Left lung (tissue), 14 donors: ENCODE measurements at regions of chr10 and their contacts with region 1.

Region 1: DNA sequence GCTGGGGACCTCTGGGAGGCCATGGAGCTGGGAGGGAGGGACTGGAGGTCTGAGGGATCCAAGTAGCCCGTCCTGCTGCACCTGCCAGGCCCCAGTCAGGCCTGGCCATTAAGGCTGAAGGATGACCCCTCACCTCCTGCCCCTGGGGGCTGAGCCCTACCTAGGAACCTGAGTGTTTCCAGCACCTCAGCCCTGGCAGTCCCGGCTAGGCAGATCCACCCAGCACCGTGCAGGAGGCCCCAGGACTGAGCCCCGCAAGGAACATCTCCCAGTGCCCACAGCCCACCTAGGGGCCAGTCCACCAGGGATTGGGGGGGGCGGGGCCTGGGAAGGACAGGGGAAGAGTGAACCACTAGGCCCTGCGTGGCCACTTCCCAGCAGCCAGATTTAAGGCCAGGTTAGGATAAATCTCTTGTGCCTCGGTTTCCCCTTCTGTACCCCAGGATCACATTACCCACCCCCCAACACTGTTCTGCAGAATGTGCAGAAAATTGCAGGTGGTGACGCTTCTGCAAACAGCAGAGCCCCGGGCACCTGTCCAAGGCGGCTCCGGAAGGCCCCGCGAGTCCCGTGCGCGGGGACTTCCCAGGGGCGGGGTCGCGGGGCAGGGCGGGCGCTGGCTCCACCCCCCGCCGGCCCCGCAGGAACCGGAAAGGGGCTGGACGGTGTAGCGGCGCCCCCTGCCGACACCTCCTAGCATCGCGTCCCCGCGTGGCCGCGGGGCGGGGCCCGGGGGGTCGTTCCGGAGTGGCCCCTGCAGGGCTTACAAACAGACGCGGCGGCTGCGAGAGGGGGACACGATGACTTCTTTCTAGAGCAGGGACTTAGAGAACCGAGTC is 55.9 kb downstream of the PWWP2B start:
- DNase-seq: peak; percentile 67 to 97 (median 90)
- ATAC-seq: peak; percentile 87
- H3K4me3 ChIP-seq: peak overlapping the region in 1 of 2 donors; percentile 11
- H3K27ac ChIP-seq: peak overlapping the region in 1 of 2 donors; percentile 35
- H3K4me1 ChIP-seq: peaks cover 14 to 40% of the 10 kb centered on the region in 2 donors
- H3K27me3 ChIP-seq: peaks cover 0 to 7% of the 10 kb centered on the region in 2 donors
- CTCF ChIP-seq: peak; percentile 94 to 99

Region 2: GRCh38 chr10:132387764-132388210 is 65.1 kb before region 1 on chr10:
- intact Hi-C with region 1: loop called in 1 of 2 experiments (anchors 5 kb)
- DNase-seq: peak in 3 of 4 donors; percentile 73 to 94 (median 76)
- ATAC-seq: peak; percentile 94
- H3K4me3 ChIP-seq: no peak overlapping the region
- H3K27ac ChIP-seq: no peak overlapping the region
- H3K4me1 ChIP-seq: peaks cover 3 to 16% of the 10 kb centered on the region in 2 donors
- H3K27me3 ChIP-seq: no peaks in the 10 kb centered on the region
- CTCF ChIP-seq: peak; percentile 58 to 82